Ovary (tissue), 10 donors: ENCODE measurements at regions of chr1 and their contacts with region 1.

Region 1: GRCh38 chr1:19974822-19975416 is 4.5 kb downstream of the PLA2G2A start:
- DNase-seq: peak; percentile 63 to 80 (median 77)
- H3K4me3 ChIP-seq: no peak overlapping the region
- H3K27ac ChIP-seq: peak overlapping the region in 1 of 2 donors; percentile 95
- H3K4me1 ChIP-seq: peaks cover 27% of the 10 kb centered on the region
- H3K27me3 ChIP-seq: no peaks in the 10 kb centered on the region
- CTCF ChIP-seq: peak; percentile 54 to 91 (median 85)
- EP300 ChIP-seq: no peak
- POLR2A ChIP-seq: peak; percentile 18

Region 2: GRCh38 chr1:20037877-20038276 is 63.0 kb after region 1 on chr1:
- intact Hi-C with region 1: loop called in 1 of 4 experiments (anchors 10 kb)
- DNase-seq: no peak
- H3K4me3 ChIP-seq: no peak overlapping the region
- H3K27ac ChIP-seq: no peak overlapping the region
- H3K4me1 ChIP-seq: peaks cover 14% of the 10 kb centered on the region
- H3K27me3 ChIP-seq: no peaks in the 10 kb centered on the region
- CTCF ChIP-seq: no peak
- EP300 ChIP-seq: no peak
- POLR2A ChIP-seq: no peak